Activated CD4-positive, alpha-beta memory T cell treated with anti-CD3 and anti-CD28 coated beads, Interleukin-2, amount 10 ng/mL, durations not matched to agents 7 days and 5 days (primary cell): ENCODE measurements at regions of chr2 and their contacts with region 1.

Region 1: GRCh38 chr2:10331027-10331701 is 28.5 kb downstream of the HPCAL1 start:
- DNase-seq: peak; percentile 82
- H3K4me3 Mint-ChIP-seq: peak overlapping the region; percentile 79
- H3K27ac Mint-ChIP-seq: peak overlapping the region; percentile 83
- H3K4me1 Mint-ChIP-seq: peaks cover 57% of the 10 kb centered on the region
- H3K27me3 Mint-ChIP-seq: no peaks in the 10 kb centered on the region

Region 2: GRCh38 chr2:10129490-10129889 is 201.7 kb before region 1 on chr2:
- CTCF ChIA-PET with region 1: interaction called, 4 read pairs
- POLR2A ChIA-PET with region 1: interaction called, 10 read pairs
- DNase-seq: no peak
- H3K4me3 Mint-ChIP-seq: peak overlapping the region; percentile 50
- H3K27ac Mint-ChIP-seq: peak overlapping the region; percentile 77
- H3K4me1 Mint-ChIP-seq: peaks cover 76% of the 10 kb centered on the region
- H3K27me3 Mint-ChIP-seq: no peaks in the 10 kb centered on the region

Region 3: GRCh38 chr2:10196110-10196892 is 134.9 kb before region 1 on chr2:
- CTCF ChIA-PET with region 1: no interaction called
- POLR2A ChIA-PET with region 1: no interaction called
- DNase-seq: no peak
- H3K4me3 Mint-ChIP-seq: no peak overlapping the region
- H3K27ac Mint-ChIP-seq: no peak overlapping the region
- H3K4me1 Mint-ChIP-seq: peaks cover under 1% of the 10 kb centered on the region
- H3K27me3 Mint-ChIP-seq: no peaks in the 10 kb centered on the region

Region 4: GRCh38 chr2:10302479-10303180 is 28.5 kb before region 1 on chr2 and contains the start of gene HPCAL1:
- CTCF ChIA-PET with region 1: interaction called, 24 read pairs
- POLR2A ChIA-PET with region 1: interaction called, 109 read pairs
- DNase-seq: peak; percentile 86
- H3K4me3 Mint-ChIP-seq: peak within 1 kb of the TSS; percentile 98
- H3K27ac Mint-ChIP-seq: peak within 1 kb of the TSS; percentile 82
- H3K4me1 Mint-ChIP-seq: peaks cover 77% of the 10 kb centered on the region
- H3K27me3 Mint-ChIP-seq: no peaks in the 10 kb centered on the region
- total RNA-seq, gene HPCAL1: 70.0 to 71.4 TPM

Region 5: DNA sequence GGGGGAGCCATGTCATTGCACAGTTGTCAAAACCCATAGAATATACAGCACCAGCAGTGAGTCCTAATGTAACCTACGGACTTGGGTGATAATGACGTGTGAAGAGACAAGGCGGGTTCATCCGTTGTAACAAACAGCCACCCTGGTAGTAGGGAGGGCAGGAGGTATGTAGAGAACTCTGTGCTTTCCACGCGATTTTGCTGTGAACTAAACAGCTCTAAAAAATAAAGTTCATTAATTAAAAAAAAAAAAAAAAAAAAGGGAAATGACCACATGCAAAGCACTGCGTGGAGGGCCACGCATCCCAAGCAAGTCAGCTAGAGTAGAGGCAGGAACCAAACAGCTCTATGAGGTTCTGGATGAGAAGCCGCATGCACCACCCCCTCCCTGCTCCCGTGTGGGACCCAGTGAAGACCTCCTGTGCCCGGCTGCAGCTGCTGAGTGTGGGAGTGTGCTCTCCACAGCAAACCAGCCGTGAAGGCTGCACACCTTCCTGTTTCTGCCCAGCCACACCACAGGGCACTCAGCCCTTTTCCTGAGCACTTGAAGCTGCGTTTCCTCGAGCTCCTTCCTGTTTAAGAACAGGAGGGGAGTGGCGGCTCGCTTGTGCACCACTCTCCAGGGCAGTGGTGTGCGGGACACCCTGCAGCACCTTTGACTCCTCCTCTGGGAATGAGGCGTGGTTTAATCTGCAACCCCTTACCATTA is 51.3 kb after region 1 on chr2:
- CTCF ChIA-PET with region 1: interaction called, 5 read pairs
- POLR2A ChIA-PET with region 1: interaction called, 15 read pairs
- DNase-seq: peak; percentile 54
- H3K4me3 Mint-ChIP-seq: peak overlapping the region; percentile 47
- H3K27ac Mint-ChIP-seq: peak overlapping the region; percentile 40
- H3K4me1 Mint-ChIP-seq: peaks cover 74% of the 10 kb centered on the region
- H3K27me3 Mint-ChIP-seq: no peaks in the 10 kb centered on the region